ENCODE measurements at regions of chr14 and their contacts with region 1.

Region 1: GRCh38 chr14:23186913-23187654 is 3.6 kb upstream of the SLC7A8 start:
- DNase-seq: peak; percentile 68
- H3K4me3 Mint-ChIP-seq: no peak overlapping the region
- H3K27ac Mint-ChIP-seq: no peak overlapping the region
- H3K4me1 Mint-ChIP-seq: peaks cover 5% of the 10 kb centered on the region
- H3K27me3 Mint-ChIP-seq: no peaks in the 10 kb centered on the region
- CTCF ChIP-seq: peak; percentile 78

Region 2: GRCh38 chr14:23068476-23069412 is 118.3 kb before region 1 on chr14:
- CTCF ChIA-PET with region 1: interaction called, 25 read pairs
- POLR2A ChIA-PET with region 1: interaction called, 3 read pairs
- intact Hi-C with region 1: no loop called
- DNase-seq: peak; percentile 93
- H3K4me3 Mint-ChIP-seq: peak overlapping the region; percentile 50
- H3K27ac Mint-ChIP-seq: no peak overlapping the region
- H3K4me1 Mint-ChIP-seq: peaks cover 26% of the 10 kb centered on the region
- H3K27me3 Mint-ChIP-seq: no peaks in the 10 kb centered on the region
- CTCF ChIP-seq: peak; percentile 94

Region 3: GRCh38 chr14:23141671-23142451 is 45.2 kb before region 1 on chr14:
- CTCF ChIA-PET with region 1: interaction called, 20 read pairs
- POLR2A ChIA-PET with region 1: interaction called, 10 read pairs
- intact Hi-C with region 1: no loop called
- DNase-seq: peak; percentile 83
- H3K4me3 Mint-ChIP-seq: no peak overlapping the region
- H3K27ac Mint-ChIP-seq: peak overlapping the region; percentile 83
- H3K4me1 Mint-ChIP-seq: peaks cover 59% of the 10 kb centered on the region
- H3K27me3 Mint-ChIP-seq: no peaks in the 10 kb centered on the region
- CTCF ChIP-seq: no peak

Region 4: GRCh38 chr14:23154964-23155587 is 32.0 kb before region 1 on chr14:
- CTCF ChIA-PET with region 1: interaction called, 30 read pairs
- POLR2A ChIA-PET with region 1: interaction called, 9 read pairs
- intact Hi-C with region 1: no loop called
- DNase-seq: peak; percentile 64
- H3K4me3 Mint-ChIP-seq: peak overlapping the region; percentile 52
- H3K27ac Mint-ChIP-seq: peak overlapping the region; percentile 49
- H3K4me1 Mint-ChIP-seq: peaks cover 37% of the 10 kb centered on the region
- H3K27me3 Mint-ChIP-seq: no peaks in the 10 kb centered on the region
- CTCF ChIP-seq: no peak

Region 5: GRCh38 chr14:23174276-23175184 is 12.6 kb before region 1 on chr14:
- CTCF ChIA-PET with region 1: interaction called, 146 read pairs
- POLR2A ChIA-PET with region 1: interaction called, 17 read pairs
- intact Hi-C with region 1: no loop called
- DNase-seq: peak; percentile 65
- H3K4me3 Mint-ChIP-seq: no peak overlapping the region
- H3K27ac Mint-ChIP-seq: no peak overlapping the region
- H3K4me1 Mint-ChIP-seq: peaks cover 39% of the 10 kb centered on the region
- H3K27me3 Mint-ChIP-seq: no peaks in the 10 kb centered on the region
- CTCF ChIP-seq: no peak

Region 6: DNA sequence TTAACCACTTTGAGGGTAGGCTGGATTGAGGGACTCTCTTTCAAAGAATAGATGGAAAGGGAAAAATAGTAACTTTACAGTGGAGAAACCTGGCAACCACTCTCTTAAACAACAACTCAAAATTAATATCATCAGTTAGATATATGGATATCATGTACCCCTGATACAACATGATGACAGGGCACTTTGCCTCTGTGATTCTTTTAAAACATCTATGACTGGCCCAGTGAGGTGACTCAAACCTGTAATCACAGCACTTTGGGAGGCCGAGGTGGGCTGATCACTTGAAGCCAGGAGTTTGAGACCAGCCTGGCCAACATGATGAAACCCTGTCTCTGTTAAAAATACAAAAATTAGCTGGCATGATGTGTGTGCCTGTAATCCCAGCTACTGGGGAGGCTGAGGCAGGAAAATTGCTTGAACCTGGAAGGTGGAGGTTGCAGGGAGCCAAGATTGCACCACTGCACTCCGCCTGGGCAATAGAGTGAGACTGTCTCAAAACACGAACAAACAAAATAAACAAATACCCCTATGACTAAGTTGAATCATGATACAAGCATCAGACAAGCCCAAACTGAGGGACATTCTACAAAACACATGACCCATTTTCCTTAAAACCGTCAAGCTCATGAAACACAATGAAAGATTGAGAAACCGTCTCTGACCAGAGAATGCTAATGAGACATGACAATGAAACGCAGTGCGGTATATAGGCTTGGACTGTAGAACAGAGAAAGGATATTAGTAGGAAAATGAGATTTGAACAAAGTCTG is 22.8 kb after region 1 on chr14:
- CTCF ChIA-PET with region 1: interaction called, 22 read pairs
- POLR2A ChIA-PET with region 1: interaction called, 3 read pairs
- intact Hi-C with region 1: no loop called
- DNase-seq: peak; percentile 91
- H3K4me3 Mint-ChIP-seq: peak overlapping the region; percentile 34
- H3K27ac Mint-ChIP-seq: peak overlapping the region; percentile 94
- H3K4me1 Mint-ChIP-seq: peaks cover 11% of the 10 kb centered on the region
- H3K27me3 Mint-ChIP-seq: no peaks in the 10 kb centered on the region
- CTCF ChIP-seq: no peak